Activated CD4-positive, alpha-beta memory T cell treated with anti-CD3 and anti-CD28 coated beads for 36 hours (primary cell): ENCODE measurements at regions of chr18 and their contacts with region 1.

Region 1: DNA sequence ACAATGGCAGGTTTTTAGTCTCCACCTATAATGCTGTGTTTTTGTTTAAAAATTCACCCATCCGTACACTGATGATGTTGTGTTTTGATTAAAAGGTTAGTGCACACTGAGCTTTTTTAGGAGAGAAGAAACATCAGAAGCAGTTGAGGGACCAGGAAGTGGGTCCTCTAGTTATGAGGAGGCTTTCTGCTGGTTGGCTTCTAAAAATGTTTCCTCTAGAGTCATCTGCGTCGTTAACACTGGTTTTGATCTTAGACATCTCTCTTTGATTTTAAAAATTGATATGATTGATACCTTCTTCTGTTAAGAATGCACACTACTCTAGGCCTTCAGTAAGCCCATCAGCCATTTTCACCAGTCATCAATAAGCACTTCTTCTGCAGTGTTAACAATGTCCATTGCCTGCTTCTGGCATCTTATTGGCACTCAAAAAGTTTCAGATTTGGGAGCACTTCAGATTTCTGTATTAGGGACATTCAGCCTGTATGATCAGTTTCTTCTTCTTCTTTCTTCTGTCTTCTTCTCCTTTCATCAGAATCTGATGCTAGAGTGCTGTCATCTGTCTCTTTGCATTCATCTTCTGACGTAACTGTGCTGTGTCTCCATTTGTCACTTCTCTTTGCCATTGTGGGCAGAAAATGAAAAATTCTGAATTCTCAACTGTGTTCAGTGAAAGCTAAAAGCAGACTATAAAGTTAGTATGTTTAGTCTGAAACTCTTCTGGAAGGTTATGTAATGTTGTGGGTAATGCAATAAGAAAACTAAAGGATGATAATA is 56.3 kb downstream of the PHLPP1 start:
- DNase-seq: no peak
- H3K4me3 Mint-ChIP-seq: no peak overlapping the region
- H3K27ac Mint-ChIP-seq: peak overlapping the region; percentile 43
- H3K4me1 Mint-ChIP-seq: peaks cover 20% of the 10 kb centered on the region
- H3K27me3 Mint-ChIP-seq: no peaks in the 10 kb centered on the region

Region 2: DNA sequence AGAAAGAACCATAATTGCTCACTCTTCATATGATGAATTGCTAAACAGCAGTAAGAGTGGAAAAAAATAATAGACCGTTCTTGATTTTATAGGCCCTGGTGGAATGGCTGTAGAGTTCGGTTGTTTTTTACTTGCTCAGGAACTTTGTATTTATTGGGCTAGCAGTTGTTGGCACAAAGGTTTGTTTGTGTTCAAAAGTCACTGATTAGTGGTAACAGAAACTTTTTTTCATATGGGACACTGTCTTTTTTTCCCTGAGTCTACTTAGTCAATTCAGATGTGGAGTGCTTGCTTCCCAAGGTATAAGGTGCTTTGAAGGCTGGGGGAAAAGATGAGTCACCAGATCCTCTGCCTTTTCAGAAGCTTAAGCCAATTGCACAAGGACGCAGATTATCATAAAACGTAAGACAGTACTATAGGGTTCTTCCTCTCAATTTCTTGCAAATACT is 30.5 kb before region 1 on chr18:
- CTCF ChIA-PET with region 1: no interaction called
- POLR2A ChIA-PET with region 1: no interaction called
- intact Hi-C with region 1: loop called (anchors 2 kb)
- DNase-seq: peak; percentile 26
- H3K4me3 Mint-ChIP-seq: no peak overlapping the region
- H3K27ac Mint-ChIP-seq: peak overlapping the region; percentile 36
- H3K4me1 Mint-ChIP-seq: peaks cover 20% of the 10 kb centered on the region
- H3K27me3 Mint-ChIP-seq: no peaks in the 10 kb centered on the region

Region 3: GRCh38 chr18:62751341-62751821 is 20.3 kb before region 1 on chr18:
- CTCF ChIA-PET with region 1: no interaction called
- POLR2A ChIA-PET with region 1: no interaction called
- intact Hi-C with region 1: no loop called
- DNase-seq: no peak
- H3K4me3 Mint-ChIP-seq: no peak overlapping the region
- H3K27ac Mint-ChIP-seq: no peak overlapping the region
- H3K4me1 Mint-ChIP-seq: peaks cover 8% of the 10 kb centered on the region
- H3K27me3 Mint-ChIP-seq: peaks cover 2% of the 10 kb centered on the region

Region 4: DNA sequence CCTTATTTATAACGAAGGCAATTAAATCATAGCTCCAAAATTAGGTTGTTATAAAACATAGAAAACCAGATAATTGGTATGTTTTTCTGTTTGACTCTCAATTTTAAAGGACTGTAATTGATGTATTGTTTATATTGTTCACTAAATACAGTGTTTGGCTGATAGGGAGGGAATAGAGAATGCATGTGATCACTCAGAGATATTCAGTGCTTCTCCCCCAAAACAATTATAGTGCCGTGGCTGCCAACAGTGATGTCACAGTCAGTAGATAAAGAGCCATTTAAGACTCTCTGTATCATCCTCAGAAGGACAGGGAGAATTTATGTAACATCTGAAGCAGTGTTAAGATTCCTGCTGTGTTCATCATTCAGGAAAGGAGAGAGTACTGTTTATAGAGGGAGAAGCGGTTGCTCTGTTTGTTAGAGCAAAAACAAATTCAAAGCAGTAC is 13.3 kb after region 1 on chr18:
- CTCF ChIA-PET with region 1: no interaction called
- POLR2A ChIA-PET with region 1: interaction called, 3 read pairs
- intact Hi-C with region 1: loop called (anchors 1 kb)
- DNase-seq: no peak
- H3K4me3 Mint-ChIP-seq: no peak overlapping the region
- H3K27ac Mint-ChIP-seq: peak overlapping the region; percentile 73
- H3K4me1 Mint-ChIP-seq: peaks cover 52% of the 10 kb centered on the region
- H3K27me3 Mint-ChIP-seq: peaks cover 3% of the 10 kb centered on the region